ENCODE measurements at regions of chr3 and their contacts with region 1.

Region 1: DNA sequence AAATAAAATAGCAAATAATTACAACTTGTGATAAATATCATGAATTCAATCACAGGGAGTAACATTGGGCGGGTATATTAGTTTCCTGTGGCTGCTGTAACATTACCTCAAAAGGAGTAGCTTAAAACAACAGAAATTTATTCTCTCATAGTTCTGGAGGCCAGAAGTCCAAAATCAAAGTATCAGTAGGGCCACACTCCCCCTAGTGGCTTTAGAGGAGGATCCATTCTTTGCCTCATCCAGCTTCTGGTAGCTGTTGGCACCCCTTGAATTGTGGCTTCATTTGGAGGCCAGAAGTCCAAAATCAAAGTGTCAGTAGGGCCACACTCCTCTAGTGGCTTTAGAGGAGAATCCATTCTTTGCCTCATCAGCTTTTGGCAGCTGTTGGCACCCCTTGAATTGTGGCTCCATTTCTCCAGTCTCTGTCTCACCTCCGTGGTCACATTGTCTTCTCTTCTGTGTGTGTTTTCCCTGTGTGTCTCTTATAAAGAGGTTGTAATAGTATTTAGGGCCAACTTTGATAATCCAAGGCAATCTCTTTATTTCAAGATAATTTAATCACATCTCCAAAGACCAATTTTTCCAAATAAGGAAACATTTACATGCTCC is 3.1 kb upstream of the CFAP20DC start:
- DNase-seq: no peak
- H3K4me3 Mint-ChIP-seq: no peak overlapping the region
- H3K27ac Mint-ChIP-seq: no peak overlapping the region
- H3K4me1 Mint-ChIP-seq: peaks cover 12% of the 10 kb centered on the region
- H3K27me3 Mint-ChIP-seq: peaks cover 4% of the 10 kb centered on the region

Region 2: DNA sequence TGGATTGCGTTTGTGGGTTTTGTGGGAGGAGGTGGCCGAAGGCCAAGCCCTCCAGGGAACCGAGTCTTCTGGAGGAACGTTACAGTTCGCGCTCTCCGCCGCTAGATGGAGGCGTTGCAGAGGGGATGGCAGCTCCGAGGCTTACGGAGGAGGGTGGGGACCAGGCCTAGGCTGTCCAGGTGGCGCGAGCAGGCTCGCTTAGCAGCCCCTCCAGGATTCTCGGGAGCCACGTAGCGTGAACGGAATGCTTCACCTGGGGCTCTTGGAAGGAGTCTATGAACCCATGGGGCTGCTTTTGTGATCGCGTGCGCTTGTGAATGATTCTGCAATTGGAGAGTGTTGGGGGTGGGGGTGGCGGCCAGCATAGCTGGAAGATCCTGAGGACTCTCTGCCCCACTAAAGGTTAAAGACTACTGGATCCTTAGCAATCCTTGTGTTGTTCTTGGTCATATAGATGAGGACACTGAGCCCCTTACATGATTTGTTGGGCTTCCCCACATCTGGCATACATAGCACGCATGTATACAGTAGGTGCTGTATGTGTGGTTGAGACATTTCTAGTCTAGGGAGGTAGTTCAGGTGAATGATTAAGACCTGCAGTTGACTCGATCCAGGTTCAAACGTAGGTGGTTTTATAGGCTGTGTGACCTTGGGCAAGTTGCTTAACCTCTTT is 412.1 kb before region 1 on chr3:
- CTCF ChIA-PET with region 1: interaction called, 31 read pairs
- DNase-seq: peak; percentile 67
- H3K4me3 Mint-ChIP-seq: no peak overlapping the region
- H3K27ac Mint-ChIP-seq: no peak overlapping the region
- H3K4me1 Mint-ChIP-seq: no peaks in the 10 kb centered on the region
- H3K27me3 Mint-ChIP-seq: peaks cover 11% of the 10 kb centered on the region

Region 3: DNA sequence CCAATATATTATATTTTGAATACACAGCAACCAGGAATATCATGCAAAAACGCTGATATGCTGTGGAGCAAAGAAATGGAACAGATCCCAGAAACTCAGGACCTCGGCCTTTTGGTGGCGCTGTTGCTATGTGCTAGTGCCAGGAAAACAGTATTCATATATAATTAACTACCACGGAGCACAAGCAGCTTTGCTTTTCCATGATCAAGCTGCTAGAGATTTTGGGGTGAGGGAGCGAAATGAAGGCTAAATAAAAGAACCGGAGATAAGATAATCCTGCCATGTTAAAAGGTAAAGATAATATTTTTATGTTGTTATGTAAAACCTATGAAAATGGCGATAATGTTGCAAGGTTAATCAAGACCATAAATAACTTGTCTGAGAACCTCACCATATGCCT is 228.6 kb before region 1 on chr3:
- CTCF ChIA-PET with region 1: interaction called, 16 read pairs
- DNase-seq: peak; percentile 34
- H3K4me3 Mint-ChIP-seq: no peak overlapping the region
- H3K27ac Mint-ChIP-seq: no peak overlapping the region
- H3K4me1 Mint-ChIP-seq: no peaks in the 10 kb centered on the region
- H3K27me3 Mint-ChIP-seq: no peaks in the 10 kb centered on the region

Region 4: DNA sequence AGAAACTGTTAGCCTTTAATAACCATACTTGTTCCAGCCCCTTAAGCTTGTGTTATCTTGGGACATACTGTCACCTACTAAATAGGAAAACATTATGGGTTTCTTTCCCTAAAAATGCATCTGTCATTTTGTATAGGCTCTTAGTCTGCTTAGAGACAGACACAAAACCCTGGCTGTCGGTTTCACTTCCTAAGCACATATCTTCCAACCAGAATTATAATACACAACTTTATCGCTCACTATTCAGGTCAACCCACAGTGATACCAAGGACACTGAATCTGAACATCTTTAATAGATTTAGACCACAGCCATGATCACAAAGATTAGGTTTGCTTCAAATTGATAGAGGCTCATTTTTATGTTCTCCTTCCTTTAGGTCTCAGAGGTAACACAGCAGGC is 114.8 kb before region 1 on chr3:
- CTCF ChIA-PET with region 1: no interaction called
- DNase-seq: no peak
- H3K4me3 Mint-ChIP-seq: no peak overlapping the region
- H3K27ac Mint-ChIP-seq: no peak overlapping the region
- H3K4me1 Mint-ChIP-seq: no peaks in the 10 kb centered on the region
- H3K27me3 Mint-ChIP-seq: no peaks in the 10 kb centered on the region

Region 5: GRCh38 chr3:58994746-58995330 is 58.1 kb before region 1 on chr3:
- CTCF ChIA-PET with region 1: interaction called, 10 read pairs
- DNase-seq: peak; percentile 57
- H3K4me3 Mint-ChIP-seq: no peak overlapping the region
- H3K27ac Mint-ChIP-seq: no peak overlapping the region
- H3K4me1 Mint-ChIP-seq: peaks cover 2% of the 10 kb centered on the region
- H3K27me3 Mint-ChIP-seq: no peaks in the 10 kb centered on the region